ENCODE measurements at regions of chr1 and their contacts with region 1.

Region 1: GRCh38 chr1:39142401-39143151 is 61.9 kb upstream of the MACF1 start:
- DNase-seq: peak; percentile 91 to 96
- H3K4me3 ChIP-seq: no peak overlapping the region
- H3K27ac ChIP-seq: peak overlapping the region; percentile 43
- H3K4me1 ChIP-seq: peaks cover 26% of the 10 kb centered on the region
- H3K27me3 ChIP-seq: no peaks in the 10 kb centered on the region
- CTCF ChIP-seq: no peak

Region 2: GRCh38 chr1:39127513-39127912 is 15.1 kb before region 1 on chr1:
- CTCF ChIA-PET with region 1: interaction called, 10 read pairs
- POLR2A ChIA-PET with region 1: interaction called, 10 read pairs
- intact Hi-C with region 1: no loop called
- DNase-seq: peak; percentile 49 to 77
- H3K4me3 ChIP-seq: no peak overlapping the region
- H3K27ac ChIP-seq: peak overlapping the region; percentile 83
- H3K4me1 ChIP-seq: peaks cover 70% of the 10 kb centered on the region
- H3K27me3 ChIP-seq: no peaks in the 10 kb centered on the region
- CTCF ChIP-seq: no peak

Region 3: DNA sequence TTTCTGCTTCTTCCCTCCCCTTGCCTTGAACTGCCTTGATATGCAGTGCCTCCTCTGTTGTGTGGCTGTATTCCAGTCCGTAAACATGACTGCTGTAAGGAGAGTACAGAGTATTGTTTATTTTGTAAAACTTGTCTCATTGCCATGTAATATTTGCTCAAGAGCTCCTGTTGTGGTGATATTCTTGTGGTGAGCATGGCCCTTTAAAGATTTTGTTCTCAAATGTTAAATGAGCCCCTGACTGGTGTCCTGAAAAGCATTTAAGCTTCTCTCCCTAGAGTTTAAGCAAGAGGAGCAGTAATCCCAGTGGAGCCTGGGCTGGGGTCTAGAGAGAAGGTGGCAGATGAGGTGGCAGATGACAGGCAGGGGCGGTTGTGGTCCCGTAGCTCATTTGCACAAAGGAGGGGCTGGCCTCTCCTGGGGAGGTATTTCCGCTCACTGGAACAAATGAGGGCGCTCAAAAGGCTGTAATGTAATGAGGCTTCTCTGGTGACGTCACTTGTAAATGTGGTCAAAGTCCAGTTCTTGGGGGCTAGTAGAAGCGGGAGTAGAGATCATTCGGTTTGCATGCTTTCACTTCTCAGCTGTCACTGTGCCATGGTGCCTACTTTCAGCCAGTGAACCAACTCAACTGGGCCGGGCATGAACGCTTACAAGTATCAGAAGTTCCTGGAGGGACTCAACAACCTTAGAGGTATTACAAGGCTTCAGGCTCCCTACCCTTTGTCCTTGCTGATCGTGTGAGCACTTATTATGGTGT is 15.9 kb after region 1 on chr1:
- CTCF ChIA-PET with region 1: interaction called, 5 read pairs
- POLR2A ChIA-PET with region 1: interaction called, 15 read pairs
- intact Hi-C with region 1: loop called (anchors 2 kb)
- DNase-seq: peak; percentile 42 to 58
- H3K4me3 ChIP-seq: no peak overlapping the region
- H3K27ac ChIP-seq: peak overlapping the region; percentile 59
- H3K4me1 ChIP-seq: peaks cover 67% of the 10 kb centered on the region
- H3K27me3 ChIP-seq: no peaks in the 10 kb centered on the region
- CTCF ChIP-seq: no peak

Region 4: DNA sequence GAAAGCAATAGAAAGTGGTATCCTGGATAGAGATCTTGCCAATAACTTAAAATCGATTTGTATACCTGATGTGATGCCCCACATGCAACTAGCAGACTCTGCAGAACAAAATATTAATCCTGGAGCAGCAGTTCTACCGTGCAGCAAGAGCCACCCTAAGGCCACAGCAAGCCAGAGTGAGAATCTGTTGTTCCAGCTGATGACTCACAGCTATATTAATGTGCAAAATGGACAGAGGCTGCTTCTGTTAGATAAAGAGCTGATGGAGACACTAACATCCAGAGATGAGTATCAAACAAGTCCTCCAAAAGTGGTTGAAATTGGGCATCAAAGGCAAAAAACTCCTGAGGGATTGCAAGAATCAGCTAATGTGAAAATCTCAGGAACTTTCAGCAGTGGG is 189.7 kb after region 1 on chr1:
- CTCF ChIA-PET with region 1: no interaction called
- POLR2A ChIA-PET with region 1: no interaction called
- intact Hi-C with region 1: no loop called
- DNase-seq: no peak
- H3K4me3 ChIP-seq: no peak overlapping the region
- H3K27ac ChIP-seq: no peak overlapping the region
- H3K4me1 ChIP-seq: no peaks in the 10 kb centered on the region
- H3K27me3 ChIP-seq: no peaks in the 10 kb centered on the region
- CTCF ChIP-seq: no peak

Measured in PC-9 (cell line).